ENCODE measurements at regions of chr11 and their contacts with region 1.

Region 1: DNA sequence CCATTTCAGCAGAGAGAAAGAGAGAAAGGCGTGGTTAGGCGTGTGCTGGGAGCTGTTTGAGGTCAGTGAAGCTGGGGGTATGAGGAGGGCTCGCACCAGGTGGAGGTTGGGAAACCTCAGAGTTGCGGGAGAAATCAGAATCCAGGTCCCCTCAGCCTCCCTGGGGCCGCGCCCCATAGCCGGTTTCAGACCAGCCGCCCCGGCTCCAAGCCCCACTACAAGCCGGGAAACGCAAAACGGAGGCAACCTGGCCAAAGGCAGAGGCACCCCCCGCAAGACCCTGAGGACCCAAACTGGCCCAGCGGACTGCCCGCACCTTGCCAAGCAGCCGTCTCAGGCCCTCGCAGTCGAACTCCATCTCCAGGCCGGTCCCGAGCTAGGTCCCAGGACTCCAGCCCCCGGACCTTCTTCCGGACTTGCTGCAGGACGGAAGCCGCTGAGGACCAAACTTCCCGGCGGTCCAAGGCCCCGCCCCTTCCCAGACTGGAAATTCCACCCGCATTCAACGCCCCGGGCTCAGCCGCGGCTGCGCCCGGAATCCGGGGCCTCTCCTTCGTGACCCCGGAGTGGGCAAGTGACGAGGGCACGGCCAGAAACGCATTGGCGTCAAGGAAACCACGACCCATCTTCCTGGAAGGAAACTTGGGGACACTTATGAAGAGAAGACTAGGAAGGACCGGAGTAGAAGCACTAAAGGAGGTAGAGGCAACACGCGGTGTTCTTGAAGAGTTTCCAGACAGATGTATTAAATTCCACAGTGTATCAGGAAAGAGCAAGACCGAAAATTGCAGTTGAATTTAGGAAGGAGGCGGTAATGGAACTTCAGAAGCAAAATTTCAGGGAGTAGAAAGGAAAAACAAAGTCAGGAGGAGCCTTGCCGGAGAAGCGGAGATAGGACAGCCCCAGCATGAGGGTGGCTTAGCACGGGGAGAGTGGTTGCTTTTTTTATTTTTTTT is at the start of gene UEVLD:
- DNase-seq: peak; percentile 93
- ATAC-seq: peak; percentile 98
- total RNA-seq, gene UEVLD: 19.3 TPM

Region 2: DNA sequence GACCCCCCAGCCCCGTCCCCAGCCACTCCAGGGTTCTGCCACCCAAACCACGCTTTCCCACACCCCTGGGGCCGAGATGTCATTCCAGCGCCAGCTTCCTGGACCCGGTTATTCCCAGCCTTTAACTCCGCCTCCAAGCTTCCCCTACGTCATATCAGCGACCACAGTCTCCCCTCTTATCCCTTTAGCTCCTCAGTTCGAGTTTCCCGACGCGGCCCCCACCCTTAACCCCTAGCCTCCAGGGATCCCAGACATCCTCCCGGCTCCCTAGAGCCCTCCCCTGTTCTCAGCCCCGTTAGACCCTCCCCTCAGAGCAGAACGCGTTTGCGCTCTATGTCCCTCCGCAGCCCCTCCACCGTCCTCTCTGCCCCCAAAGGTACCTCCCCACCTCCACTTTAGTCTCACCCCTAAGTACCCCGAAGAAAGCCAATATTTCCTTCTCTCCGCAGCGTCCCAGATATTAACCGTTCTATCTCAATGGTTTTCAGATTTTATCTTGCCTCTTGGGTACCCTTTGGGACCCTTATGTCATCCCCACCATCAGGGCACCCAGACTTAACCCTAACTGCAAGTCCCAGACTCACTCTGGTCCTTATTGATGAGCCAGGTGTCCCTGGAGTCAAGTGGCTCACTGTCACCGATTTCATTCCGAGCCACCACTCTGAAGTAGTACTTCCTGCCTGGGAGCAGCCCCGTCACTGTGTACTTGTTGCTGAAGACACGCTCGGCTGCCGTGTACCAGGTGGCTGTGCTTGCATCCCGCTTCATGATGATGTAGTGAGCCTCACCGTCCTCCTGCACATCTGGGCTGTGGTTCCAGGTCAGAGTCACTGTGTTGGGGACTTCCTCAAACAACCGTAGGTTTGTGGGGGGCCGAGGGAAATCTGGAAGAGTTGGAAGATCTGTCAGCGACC is 118.0 kb after region 1 on chr11:
- intact Hi-C with region 1: loop called (anchors 10 kb)
- DNase-seq: peak; percentile 67
- ATAC-seq: peak; percentile 65